Heart right ventricle (tissue), 16 donors: ENCODE measurements at regions of chr2 and their contacts with region 1.

Region 1: DNA sequence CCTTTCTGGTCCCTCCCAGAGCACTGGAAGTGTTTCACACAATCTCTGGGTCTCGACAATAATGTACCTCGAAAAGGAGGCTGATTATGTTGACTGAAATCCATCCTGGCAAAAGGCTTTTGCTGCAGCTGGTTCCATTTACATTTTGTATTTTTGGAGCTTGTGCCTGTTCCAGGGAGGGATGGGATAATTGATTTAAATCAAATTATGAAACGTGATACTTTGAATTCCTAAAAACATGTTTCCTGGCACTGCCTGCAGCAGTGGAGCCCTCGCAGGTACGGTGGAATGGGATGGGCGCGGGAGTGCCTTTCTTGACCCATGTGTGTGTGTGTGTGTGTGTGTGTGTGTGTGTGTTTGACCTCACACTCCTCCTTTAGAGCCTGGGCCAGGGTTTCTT is 455.5 kb upstream of the MEIS1 start:
- DNase-seq: no peak
- ATAC-seq: no peak
- H3K4me3 ChIP-seq: no peak overlapping the region
- H3K27ac ChIP-seq: no peak overlapping the region
- H3K4me1 ChIP-seq: no peaks in the 10 kb centered on the region
- H3K27me3 ChIP-seq: no peaks in the 10 kb centered on the region
- CTCF ChIP-seq: no peak

Region 2: GRCh38 chr2:66030553-66030952 is 51.1 kb after region 1 on chr2:
- intact Hi-C with region 1: loop called in 1 of 10 experiments (anchors 2 kb)
- DNase-seq: no peak
- ATAC-seq: no peak
- H3K4me3 ChIP-seq: no peak overlapping the region
- H3K27ac ChIP-seq: no peak overlapping the region
- H3K4me1 ChIP-seq: no peaks in the 10 kb centered on the region
- H3K27me3 ChIP-seq: peaks cover 0 to 4% (median 0%) of the 10 kb centered on the region in 7 donors
- CTCF ChIP-seq: no peak